Mucosa of descending colon (tissue), 3 donors: ENCODE measurements at regions of chr19 and their contacts with region 1.

Region 1: DNA sequence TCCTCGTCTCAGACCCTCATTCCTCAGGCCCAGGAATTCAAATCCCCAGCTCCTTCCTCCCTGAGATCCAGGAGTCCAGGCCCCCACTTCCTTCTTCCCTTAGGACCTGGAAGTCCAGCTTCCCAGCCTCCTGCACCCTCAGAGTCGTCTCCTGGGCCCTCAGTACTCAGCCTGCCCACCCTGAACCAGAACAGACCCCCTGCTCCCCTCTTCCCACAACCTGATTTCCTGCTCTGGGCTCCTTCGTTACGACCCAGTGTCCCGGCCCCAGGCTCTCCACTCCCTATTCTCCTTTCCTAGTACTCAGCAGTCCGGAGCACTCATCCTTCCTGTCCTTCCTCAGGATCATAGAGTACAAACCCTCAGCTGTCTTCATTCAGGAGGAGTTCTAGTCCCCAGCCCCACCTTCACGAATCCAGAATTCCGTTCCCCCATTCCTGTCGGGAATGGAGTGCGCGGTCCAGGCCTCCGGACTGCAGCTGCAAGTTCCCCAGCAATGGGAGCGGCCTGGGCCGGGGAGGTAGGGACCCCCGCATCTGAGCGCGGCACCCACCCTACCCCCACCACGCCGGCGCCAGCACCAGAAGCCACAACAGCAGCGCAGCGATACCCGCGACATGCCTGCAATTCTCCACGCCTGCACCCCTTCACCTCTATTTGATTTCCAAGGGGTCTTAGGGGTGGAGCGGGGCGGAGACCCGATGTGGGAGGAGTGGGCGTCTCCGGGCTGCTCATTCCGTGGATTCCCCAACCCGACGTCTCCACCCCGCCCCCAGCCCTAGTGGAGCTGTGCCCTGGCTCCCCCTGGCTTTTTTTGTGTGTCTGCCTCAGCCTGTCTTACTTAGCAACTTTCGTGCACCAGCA is 12.7 kb downstream of the EGLN2 start:
- DNase-seq: peak in 1 of 3 donors; percentile 33
- ATAC-seq: peak; percentile 2
- H3K4me3 ChIP-seq: no peak overlapping the region
- H3K4me1 ChIP-seq: peaks cover 4% of the 10 kb centered on the region
- CTCF ChIP-seq: no peak

Region 2: GRCh38 chr19:40662921-40663694 is 148.6 kb before region 1 on chr19:
- intact Hi-C with region 1: loop called (anchors 5 to 10 kb)
- DNase-seq: peak; percentile 93 to 95 (median 94)
- ATAC-seq: peak; percentile 97
- H3K4me3 ChIP-seq: peak overlapping the region; percentile 36
- H3K4me1 ChIP-seq: peaks cover 5% of the 10 kb centered on the region
- CTCF ChIP-seq: peak; percentile 4

Region 3: DNA sequence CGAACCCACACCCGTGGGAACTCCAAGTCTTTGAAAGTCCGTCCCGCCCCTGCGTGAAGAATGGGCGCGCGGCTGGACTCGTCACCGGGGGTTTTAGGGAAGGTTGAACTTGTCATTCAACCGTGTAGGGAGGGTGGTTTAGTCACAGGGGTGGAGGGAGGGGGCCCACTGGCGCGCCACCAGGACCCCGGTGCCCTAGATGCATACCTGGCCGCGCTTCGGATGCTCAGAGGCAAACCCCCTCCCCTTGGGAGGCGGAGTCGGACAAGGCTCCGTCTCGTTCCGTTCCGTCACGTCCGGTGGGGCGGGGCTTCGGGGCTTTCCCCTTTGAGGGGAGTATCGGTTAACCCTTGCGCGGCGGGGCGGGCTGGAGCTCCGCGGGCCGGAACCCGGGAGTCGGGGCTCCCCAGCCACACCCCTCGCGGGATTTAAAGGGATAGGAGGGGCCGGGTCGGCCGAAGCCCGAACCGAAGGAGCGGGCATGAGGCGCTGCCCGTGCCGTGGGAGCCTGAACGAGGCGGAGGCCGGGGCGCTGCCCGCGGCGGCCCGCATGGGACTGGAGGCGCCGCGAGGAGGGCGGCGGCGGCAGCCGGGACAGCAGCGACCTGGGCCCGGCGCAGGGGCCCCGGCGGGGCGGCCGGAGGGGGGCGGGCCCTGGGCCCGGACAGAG is 94.9 kb before region 1 on chr19 and contains the starts of genes COQ8B and ITPKC:
- intact Hi-C with region 1: no loop called
- DNase-seq: peak; percentile 100
- ATAC-seq: peak; percentile 76
- H3K4me3 ChIP-seq: peak within 1 kb of the TSS; percentile 69
- H3K4me1 ChIP-seq: peaks cover 31% of the 10 kb centered on the region
- CTCF ChIP-seq: peak; percentile 27
- total RNA-seq, gene COQ8B: 29.9 to 49.2 (median 39.3) TPM
- total RNA-seq, gene ITPKC: 22.1 to 26.1 (median 23.2) TPM

Region 4: GRCh38 chr19:40862785-40863184 is 51.1 kb after region 1 on chr19:
- intact Hi-C with region 1: no loop called
- DNase-seq: no peak
- ATAC-seq: no peak
- H3K4me3 ChIP-seq: no peak overlapping the region
- H3K4me1 ChIP-seq: no peaks in the 10 kb centered on the region
- CTCF ChIP-seq: no peak

Region 5: GRCh38 chr19:40962460-40962961 is 150.8 kb after region 1 on chr19:
- intact Hi-C with region 1: no loop called
- DNase-seq: no peak
- ATAC-seq: no peak
- H3K4me3 ChIP-seq: no peak overlapping the region
- H3K4me1 ChIP-seq: no peaks in the 10 kb centered on the region
- CTCF ChIP-seq: no peak

Region 6: GRCh38 chr19:41161903-41162302 is 350.2 kb after region 1 on chr19:
- intact Hi-C with region 1: no loop called
- DNase-seq: no peak
- ATAC-seq: no peak
- H3K4me3 ChIP-seq: no peak overlapping the region
- H3K4me1 ChIP-seq: peaks cover 15% of the 10 kb centered on the region
- CTCF ChIP-seq: no peak